ENCODE measurements at regions of chr6 and their contacts with region 1.

Region 1: DNA sequence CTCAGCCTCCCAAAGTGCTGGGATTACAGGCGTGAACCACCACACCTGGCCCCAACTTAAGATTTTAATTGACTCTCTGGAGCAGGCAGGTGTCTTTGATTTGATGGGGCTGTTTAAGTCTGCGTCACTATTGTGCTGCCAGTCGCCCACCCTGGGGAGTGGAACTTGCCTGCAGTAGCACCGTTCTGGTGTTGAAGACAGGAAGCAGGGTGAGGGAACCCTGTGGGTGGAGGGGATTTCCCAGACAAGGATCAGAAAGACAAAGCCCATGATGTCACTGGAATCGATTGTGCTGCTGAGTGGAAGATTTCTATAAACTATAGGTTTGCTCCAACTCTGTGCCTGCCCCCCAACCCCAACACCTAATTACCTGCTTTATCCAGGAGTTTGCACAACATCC is 11.0 kb downstream of the ALDH8A1 start:
- DNase-seq: no peak
- H3K4me3 ChIP-seq: no peak overlapping the region
- H3K27ac ChIP-seq: no peak overlapping the region
- H3K4me1 ChIP-seq: no peaks in the 10 kb centered on the region
- H3K27me3 ChIP-seq: no peaks in the 10 kb centered on the region
- CTCF ChIP-seq: no peak
- POLR2A ChIP-seq: no peak

Region 2: DNA sequence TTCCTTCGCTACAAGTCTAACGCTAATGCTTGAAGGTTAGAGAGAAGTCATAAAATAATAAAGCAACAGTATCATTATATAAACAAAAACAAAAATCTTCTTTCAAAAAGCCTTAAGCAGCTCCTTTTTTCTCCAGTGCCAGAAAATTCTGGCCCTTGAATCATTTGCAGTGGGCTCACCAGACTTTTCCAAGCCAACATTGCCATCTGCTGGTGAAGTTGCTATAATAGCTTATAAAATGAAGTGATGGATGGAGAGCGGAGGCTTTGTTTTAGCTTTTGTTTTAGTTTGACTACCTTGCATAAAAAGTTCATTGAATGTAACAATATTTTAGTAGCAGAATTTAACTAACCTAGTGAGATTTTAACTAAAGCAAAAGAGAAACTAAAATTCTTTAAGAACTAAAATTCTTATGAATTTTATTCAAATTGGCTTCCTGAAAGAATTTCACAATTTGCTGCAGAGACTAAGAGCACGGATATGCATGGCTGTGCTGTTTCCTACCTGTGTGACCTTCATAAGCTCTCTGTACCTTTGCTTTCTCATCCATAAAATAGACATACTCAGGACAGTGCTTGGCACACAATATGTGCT is 841.7 kb before region 1 on chr6:
- CTCF ChIA-PET with region 1: interaction called, 18 read pairs
- POLR2A ChIA-PET with region 1: no interaction called
- dilution Hi-C with region 1: no loop called
- intact Hi-C with region 1: no loop called
- DNase-seq: peak; percentile 65
- H3K4me3 ChIP-seq: no peak overlapping the region
- H3K27ac ChIP-seq: no peak overlapping the region
- H3K4me1 ChIP-seq: no peaks in the 10 kb centered on the region
- H3K27me3 ChIP-seq: peaks cover 21 to 27% of the 10 kb centered on the region in 2 experiments
- CTCF ChIP-seq: peak; percentile 41 to 46
- POLR2A ChIP-seq: no peak

Region 3: DNA sequence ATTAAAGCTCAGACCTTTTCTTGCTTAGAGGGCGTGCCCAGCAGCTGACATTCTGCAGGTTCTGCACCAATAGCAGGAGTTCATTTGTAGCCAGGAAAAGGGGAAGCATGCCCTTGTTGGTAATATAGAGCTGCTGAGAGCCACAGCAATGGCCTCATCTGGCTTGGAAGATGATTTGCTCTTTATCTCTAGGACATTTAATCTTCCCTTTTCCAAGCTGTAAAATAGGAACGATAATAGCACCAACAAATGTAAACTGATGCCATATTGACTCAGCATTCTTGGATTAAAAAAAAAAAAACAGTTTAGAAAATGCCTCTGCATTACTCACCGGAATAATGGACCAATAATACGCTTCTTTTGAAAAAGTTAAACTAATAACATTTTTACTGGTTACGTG is 793.1 kb before region 1 on chr6:
- CTCF ChIA-PET with region 1: interaction called, 15 read pairs
- POLR2A ChIA-PET with region 1: no interaction called
- dilution Hi-C with region 1: no loop called
- intact Hi-C with region 1: no loop called
- DNase-seq: no peak
- H3K4me3 ChIP-seq: no peak overlapping the region
- H3K27ac ChIP-seq: no peak overlapping the region
- H3K4me1 ChIP-seq: no peaks in the 10 kb centered on the region
- H3K27me3 ChIP-seq: peaks cover 0 to 2% of the 10 kb centered on the region in 2 experiments
- CTCF ChIP-seq: no peak
- POLR2A ChIP-seq: no peak

Region 4: DNA sequence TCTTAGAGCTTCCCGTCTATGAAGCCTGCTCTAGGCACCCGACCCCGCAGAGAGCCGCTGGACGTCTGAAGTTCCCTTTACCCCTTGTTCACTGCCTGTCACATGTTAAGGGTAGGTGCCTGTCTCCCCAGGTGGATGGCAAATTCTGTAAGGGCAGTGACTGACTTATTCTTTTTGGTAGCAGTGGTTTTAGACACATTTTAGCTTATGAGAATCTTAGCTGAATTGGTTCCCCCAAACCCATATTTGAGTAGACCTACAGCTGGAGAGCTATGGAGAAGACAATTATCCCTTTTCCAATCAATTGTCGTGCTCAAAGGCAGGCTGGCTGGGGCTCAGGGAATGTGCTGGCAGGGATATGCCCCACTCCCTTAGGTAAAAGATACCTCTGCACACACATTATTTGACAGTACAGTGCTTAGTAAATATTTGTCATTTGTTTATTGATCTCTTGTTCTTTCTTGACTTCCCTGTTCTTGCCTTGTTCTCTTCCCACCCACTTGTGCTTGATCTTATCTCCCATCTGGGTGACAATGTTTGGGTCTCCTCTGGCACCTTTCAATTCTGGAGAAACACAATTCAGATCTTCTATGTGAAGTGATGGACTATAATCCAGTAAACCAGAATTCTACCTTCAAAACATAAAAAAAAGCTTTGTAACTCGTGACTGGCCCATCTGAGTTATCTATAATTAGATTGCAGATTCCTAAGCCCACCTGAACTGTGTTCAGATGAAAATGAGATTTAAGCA is 772.2 kb before region 1 on chr6:
- CTCF ChIA-PET with region 1: interaction called, 15 read pairs
- POLR2A ChIA-PET with region 1: no interaction called
- dilution Hi-C with region 1: no loop called
- intact Hi-C with region 1: no loop called
- DNase-seq: no peak
- H3K4me3 ChIP-seq: no peak overlapping the region
- H3K27ac ChIP-seq: no peak overlapping the region
- H3K4me1 ChIP-seq: peaks cover 22% of the 10 kb centered on the region
- H3K27me3 ChIP-seq: no peaks in the 10 kb centered on the region
- CTCF ChIP-seq: no peak
- POLR2A ChIP-seq: peak; percentile 60

Region 5: DNA sequence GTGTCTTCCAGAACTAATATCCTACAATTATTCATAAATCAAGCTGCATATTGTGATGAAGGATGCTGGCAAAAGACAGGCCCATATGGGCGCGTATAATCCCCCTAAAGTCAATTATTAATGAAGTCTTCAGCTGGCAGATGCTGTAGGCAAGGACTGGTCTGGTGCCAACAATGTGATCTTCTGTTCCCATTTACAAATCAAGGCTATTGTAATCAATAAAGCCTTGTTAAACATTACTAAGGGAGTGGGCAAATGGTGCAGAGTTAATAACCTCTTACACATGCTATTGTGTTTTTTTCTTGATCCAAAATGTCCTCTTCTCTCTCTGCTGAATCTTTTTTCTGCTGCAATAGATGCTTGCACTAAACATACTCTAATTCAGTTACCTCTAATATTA is 108.0 kb before region 1 on chr6:
- CTCF ChIA-PET with region 1: interaction called, 114 read pairs
- POLR2A ChIA-PET with region 1: no interaction called
- dilution Hi-C with region 1: no loop called
- intact Hi-C with region 1: no loop called
- DNase-seq: no peak
- H3K4me3 ChIP-seq: no peak overlapping the region
- H3K27ac ChIP-seq: no peak overlapping the region
- H3K4me1 ChIP-seq: no peaks in the 10 kb centered on the region
- H3K27me3 ChIP-seq: peaks cover 0 to under 1% of the 10 kb centered on the region in 2 experiments
- CTCF ChIP-seq: no peak
- POLR2A ChIP-seq: no peak

Region 6: GRCh38 chr6:134888316-134888715 is 50.6 kb before region 1 on chr6:
- CTCF ChIA-PET with region 1: interaction called, 82 read pairs
- POLR2A ChIA-PET with region 1: no interaction called
- dilution Hi-C with region 1: no loop called
- intact Hi-C with region 1: no loop called
- DNase-seq: no peak
- H3K4me3 ChIP-seq: no peak overlapping the region
- H3K27ac ChIP-seq: no peak overlapping the region
- H3K4me1 ChIP-seq: peaks cover 3% of the 10 kb centered on the region
- H3K27me3 ChIP-seq: no peaks in the 10 kb centered on the region
- CTCF ChIP-seq: no peak
- POLR2A ChIP-seq: no peak

Region 7: DNA sequence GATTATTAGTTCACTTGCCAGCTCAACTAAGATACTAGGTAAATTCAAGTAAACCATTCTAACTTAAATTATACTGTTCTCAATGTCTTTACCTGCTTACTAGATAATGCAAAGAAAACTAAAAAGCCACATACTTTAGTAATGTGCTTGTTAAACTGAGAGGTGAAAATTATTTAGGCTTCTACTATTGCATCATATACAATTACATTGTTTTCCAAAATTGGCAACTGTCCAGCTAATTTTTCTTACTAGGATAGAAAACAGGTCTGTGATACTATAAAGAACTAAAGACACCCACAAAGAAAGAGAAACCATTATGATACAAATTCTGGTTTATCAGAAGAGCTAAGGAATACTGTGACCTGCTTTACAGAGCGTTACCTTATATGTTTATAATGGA is 56.6 kb after region 1 on chr6:
- CTCF ChIA-PET with region 1: interaction called, 10 read pairs
- POLR2A ChIA-PET with region 1: no interaction called
- dilution Hi-C with region 1: no loop called
- intact Hi-C with region 1: no loop called
- DNase-seq: peak; percentile 42
- H3K4me3 ChIP-seq: no peak overlapping the region
- H3K27ac ChIP-seq: no peak overlapping the region
- H3K4me1 ChIP-seq: peaks cover 3% of the 10 kb centered on the region
- H3K27me3 ChIP-seq: no peaks in the 10 kb centered on the region
- CTCF ChIP-seq: no peak
- POLR2A ChIP-seq: no peak